ENCODE measurements at regions of chr12 and their contacts with region 1.

Region 1: GRCh38 chr12:132489602-132490239 is at the start of gene FBRSL1:
- DNase-seq: peak; percentile 87 to 88
- H3K4me3 ChIP-seq: peak within 1 kb of the TSS; percentile 82
- H3K4me3 Mint-ChIP-seq: peak within 1 kb of the TSS; percentile 70
- H3K27ac Mint-ChIP-seq: no peak within 1 kb of the TSS
- H3K4me1 ChIP-seq: peaks cover 45% of the 10 kb centered on the region
- H3K4me1 Mint-ChIP-seq: peaks cover 8% of the 10 kb centered on the region
- H3K27me3 ChIP-seq: no peaks in the 10 kb centered on the region
- H3K27me3 Mint-ChIP-seq: peaks cover 4% of the 10 kb centered on the region
- CTCF ChIP-seq: no peak
- total RNA-seq, gene FBRSL1: 90.3 and 96.1 TPM in 2 replicates

Region 2: DNA sequence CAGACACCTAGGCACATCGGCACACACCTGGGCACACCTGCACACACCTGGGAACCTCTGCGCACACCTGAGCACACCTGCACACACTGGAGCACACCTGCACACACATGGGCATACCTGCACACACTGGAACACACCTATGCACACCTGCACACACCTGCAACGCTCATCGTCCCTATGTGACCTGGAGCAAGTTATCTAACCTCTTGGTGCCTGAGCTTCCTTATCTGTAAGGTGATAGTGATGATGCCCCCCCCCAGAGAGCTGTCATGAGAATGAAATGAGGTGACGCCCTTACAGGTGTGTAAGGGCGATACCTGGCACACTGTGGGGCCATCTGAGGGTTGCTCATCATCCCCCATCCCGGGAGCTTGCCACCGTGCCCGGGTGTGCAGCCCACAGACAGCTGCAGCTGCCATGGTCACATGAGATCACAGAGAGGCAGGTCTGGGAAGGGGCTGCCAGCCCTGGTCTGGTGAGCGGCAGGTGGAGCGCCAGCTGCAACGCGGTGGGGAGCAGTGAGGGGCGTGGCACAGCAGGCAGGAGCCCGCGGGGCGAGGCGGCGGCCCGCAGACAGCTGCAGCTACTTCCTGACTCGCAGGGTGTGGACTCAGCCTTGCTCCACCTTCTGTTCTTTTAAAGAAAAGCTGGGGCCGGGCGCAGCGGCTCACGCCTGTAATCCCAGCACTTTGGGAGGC is 59.6 kb before region 1 on chr12:
- CTCF ChIA-PET with region 1: no interaction called
- POLR2A ChIA-PET with region 1: interaction called, 8 read pairs
- intact Hi-C with region 1: loop called (anchors 5 kb)
- DNase-seq: peak; percentile 69 to 76
- H3K4me3 ChIP-seq: peak overlapping the region; percentile 21
- H3K4me3 Mint-ChIP-seq: peak overlapping the region; percentile 67
- H3K27ac Mint-ChIP-seq: peak overlapping the region; percentile 69
- H3K4me1 ChIP-seq: peaks cover 23% of the 10 kb centered on the region
- H3K4me1 Mint-ChIP-seq: peaks cover 6% of the 10 kb centered on the region
- H3K27me3 ChIP-seq: no peaks in the 10 kb centered on the region
- H3K27me3 Mint-ChIP-seq: no peaks in the 10 kb centered on the region
- CTCF ChIP-seq: no peak

Region 3: DNA sequence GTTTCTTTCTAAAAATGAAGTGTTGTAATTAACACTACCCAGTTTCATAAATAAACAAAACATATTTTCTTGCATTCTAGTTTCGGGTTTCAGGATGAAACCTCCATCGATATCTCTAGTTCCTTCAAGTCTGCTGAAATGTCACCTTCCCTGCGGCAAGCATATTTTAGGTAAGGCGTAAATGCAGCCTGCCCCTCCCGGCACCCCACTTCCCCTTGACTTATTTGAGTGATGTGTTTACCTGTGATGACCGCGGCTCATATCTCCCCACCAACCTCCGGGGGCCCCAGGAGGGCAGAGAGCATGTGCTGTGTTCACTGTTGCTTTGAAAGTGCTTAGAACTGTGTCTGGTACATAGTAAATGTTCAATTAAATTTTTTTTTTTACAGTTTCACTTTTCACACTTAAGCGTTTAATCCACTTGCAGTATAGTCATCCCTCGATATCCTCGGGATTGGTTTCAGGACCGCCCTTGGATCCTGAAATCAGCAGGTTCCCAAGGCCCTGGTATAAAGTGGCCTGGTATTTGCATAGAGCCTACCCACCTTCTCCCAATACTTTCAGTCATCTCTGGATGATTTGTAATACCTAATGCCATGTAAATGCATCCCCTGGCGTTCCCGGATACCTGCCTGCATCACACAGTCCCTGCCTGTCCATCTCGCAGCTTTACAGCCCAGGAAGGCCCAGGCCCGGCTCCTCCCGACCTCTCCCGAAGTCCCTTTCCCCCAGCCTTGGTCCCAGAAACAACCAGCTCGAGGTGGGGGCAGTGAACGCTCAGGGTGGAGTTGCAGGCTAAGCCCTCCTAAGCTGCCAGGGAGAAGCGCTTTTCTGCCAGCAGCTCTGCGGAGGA is 39.9 kb before region 1 on chr12:
- CTCF ChIA-PET with region 1: no interaction called
- POLR2A ChIA-PET with region 1: no interaction called
- intact Hi-C with region 1: no loop called
- DNase-seq: no peak
- H3K4me3 ChIP-seq: no peak overlapping the region
- H3K4me3 Mint-ChIP-seq: no peak overlapping the region
- H3K27ac Mint-ChIP-seq: no peak overlapping the region
- H3K4me1 ChIP-seq: no peaks in the 10 kb centered on the region
- H3K4me1 Mint-ChIP-seq: peaks cover 9% of the 10 kb centered on the region
- H3K27me3 ChIP-seq: no peaks in the 10 kb centered on the region
- H3K27me3 Mint-ChIP-seq: no peaks in the 10 kb centered on the region
- CTCF ChIP-seq: no peak

Region 4: GRCh38 chr12:132517013-132517739 is 27.5 kb after region 1 on chr12:
- CTCF ChIA-PET with region 1: no interaction called
- POLR2A ChIA-PET with region 1: no interaction called
- intact Hi-C with region 1: loop called (anchors 2 kb)
- DNase-seq: peak; percentile 54 to 58
- H3K4me3 ChIP-seq: no peak overlapping the region
- H3K4me3 Mint-ChIP-seq: peak overlapping the region; percentile 23
- H3K27ac Mint-ChIP-seq: peak overlapping the region; percentile 50
- H3K4me1 ChIP-seq: peaks cover 16% of the 10 kb centered on the region
- H3K4me1 Mint-ChIP-seq: peaks cover 11% of the 10 kb centered on the region
- H3K27me3 ChIP-seq: no peaks in the 10 kb centered on the region
- H3K27me3 Mint-ChIP-seq: no peaks in the 10 kb centered on the region
- CTCF ChIP-seq: no peak

Region 5: GRCh38 chr12:132523576-132524331 is 34.0 kb after region 1 on chr12:
- CTCF ChIA-PET with region 1: no interaction called
- POLR2A ChIA-PET with region 1: no interaction called
- intact Hi-C with region 1: loop called (anchors 1 kb)
- DNase-seq: peak; percentile 61 to 78
- H3K4me3 ChIP-seq: no peak overlapping the region
- H3K4me3 Mint-ChIP-seq: no peak overlapping the region
- H3K27ac Mint-ChIP-seq: no peak overlapping the region
- H3K4me1 ChIP-seq: peaks cover 12% of the 10 kb centered on the region
- H3K4me1 Mint-ChIP-seq: peaks cover 4% of the 10 kb centered on the region
- H3K27me3 ChIP-seq: no peaks in the 10 kb centered on the region
- H3K27me3 Mint-ChIP-seq: no peaks in the 10 kb centered on the region
- CTCF ChIP-seq: peak; percentile 84 to 85

Region 6: GRCh38 chr12:132560614-132561426 is 71.1 kb after region 1 on chr12:
- CTCF ChIA-PET with region 1: no interaction called
- POLR2A ChIA-PET with region 1: no interaction called
- intact Hi-C with region 1: loop called (anchors 5 kb)
- DNase-seq: peak; percentile 84 to 88
- H3K4me3 ChIP-seq: peak overlapping the region; percentile 98
- H3K4me3 Mint-ChIP-seq: peak overlapping the region; percentile 80
- H3K27ac Mint-ChIP-seq: peak overlapping the region; percentile 55
- H3K4me1 ChIP-seq: no peaks in the 10 kb centered on the region
- H3K4me1 Mint-ChIP-seq: peaks cover 6% of the 10 kb centered on the region
- H3K27me3 ChIP-seq: no peaks in the 10 kb centered on the region
- H3K27me3 Mint-ChIP-seq: no peaks in the 10 kb centered on the region
- CTCF ChIP-seq: peak; percentile 82 to 93